ENCODE measurements at regions of chr5 and their contacts with region 1.

Region 1: DNA sequence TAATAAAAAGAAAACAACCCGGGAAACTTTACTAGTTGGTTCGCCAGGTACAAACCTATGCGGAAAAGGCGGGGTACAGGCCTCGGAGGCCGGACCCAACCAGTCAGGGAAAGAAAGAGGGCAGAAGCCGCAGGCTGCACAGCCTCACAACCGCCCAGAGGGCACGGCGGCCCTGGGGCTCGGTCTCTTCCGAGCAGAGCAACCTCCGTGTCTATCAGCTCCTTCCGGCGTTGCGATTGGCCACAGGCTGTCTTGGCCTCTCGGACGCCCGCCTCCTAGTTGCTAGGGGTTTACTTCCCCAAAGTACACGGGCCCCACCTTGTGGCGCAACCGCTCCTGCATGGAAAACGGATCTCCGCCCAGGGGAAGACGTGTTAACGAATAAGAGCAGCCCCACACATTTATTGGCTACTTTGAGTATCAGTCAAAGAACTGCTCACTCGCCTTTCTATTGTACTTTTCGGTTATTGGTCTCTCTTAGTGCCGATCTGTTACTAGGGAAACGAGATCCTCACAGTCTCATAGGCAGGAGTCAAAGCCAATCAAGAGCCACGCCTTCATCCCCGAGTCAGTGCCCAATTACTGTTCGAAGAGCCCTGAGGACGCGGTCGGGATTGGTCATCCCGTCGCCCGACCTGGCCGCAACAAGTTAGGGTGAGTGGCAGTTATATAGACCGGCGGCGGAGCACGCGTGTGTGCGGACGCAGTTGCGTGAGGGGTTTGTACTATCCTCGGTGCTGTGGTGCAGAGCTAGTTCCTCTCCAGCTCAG is at the start of gene G3BP1:
- DNase-seq: peak; percentile 100
- H3K4me3 ChIP-seq: peak within 1 kb of the TSS; percentile 89 to 92
- H3K27ac ChIP-seq: peak within 1 kb of the TSS; percentile 99
- H3K4me1 ChIP-seq: peaks cover 9 to 30% of the 10 kb centered on the region in 2 donors
- H3K27me3 ChIP-seq: no peaks in the 10 kb centered on the region
- CTCF ChIP-seq: peak; percentile 33 to 55 (median 51)
- total RNA-seq, gene G3BP1: 138 TPM

Region 2: DNA sequence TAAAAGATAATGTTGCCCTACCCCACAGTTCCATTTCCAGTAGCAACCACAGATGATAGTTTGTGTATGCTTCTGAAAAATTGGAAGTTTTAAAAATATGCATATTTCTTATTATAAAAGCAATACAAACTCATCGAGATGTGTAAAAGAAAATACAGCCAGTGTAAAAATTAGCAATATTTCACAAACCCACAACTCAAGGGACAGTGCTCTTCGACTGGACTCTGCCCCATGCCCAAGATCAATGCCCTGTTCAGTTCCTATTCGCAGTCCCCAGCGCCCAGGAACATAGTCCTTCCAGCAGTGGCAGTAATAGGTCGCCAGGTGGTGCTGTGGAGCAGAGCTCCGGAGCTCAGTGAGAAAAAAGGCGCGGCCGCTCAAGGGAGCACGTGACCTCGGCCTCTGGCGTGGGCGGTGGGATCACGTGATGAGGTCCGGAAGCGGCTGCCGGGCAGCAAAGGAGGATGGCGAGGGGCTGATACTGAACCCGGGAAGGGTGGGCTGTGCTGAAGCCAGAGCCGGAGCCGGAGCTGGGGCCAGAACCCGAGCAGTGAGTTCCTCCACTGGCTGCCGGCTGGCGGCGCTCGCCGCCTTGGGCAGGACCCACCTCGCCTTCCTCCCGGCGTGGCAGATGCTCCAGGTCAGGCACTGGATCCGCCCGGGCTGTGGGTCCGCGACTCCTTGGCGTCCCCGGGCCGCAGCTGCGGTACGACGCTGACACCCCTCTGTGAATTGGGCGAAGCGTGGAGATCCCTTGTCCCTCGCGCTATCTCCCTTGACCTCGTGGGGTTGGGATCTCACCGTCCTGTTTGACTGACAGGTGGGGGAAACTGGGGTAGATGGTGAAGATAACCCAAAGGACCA is 324.0 kb before region 1 on chr5 and contains the start of gene SLC36A1:
- intact Hi-C with region 1: loop called (anchors 1 kb)
- DNase-seq: peak; percentile 73 to 97
- H3K4me3 ChIP-seq: peak within 1 kb of the TSS; percentile 63 to 83
- H3K27ac ChIP-seq: peak within 1 kb of the TSS in 1 of 2 donors; percentile 47
- H3K4me1 ChIP-seq: no peaks in the 10 kb centered on the region
- H3K27me3 ChIP-seq: no peaks in the 10 kb centered on the region
- CTCF ChIP-seq: peak; percentile 96 to 97 (median 96)
- total RNA-seq, gene SLC36A1: 19.9 TPM

Region 3: GRCh38 chr5:151686674-151687407 is 84.6 kb before region 1 on chr5 and contains the start of gene SPARC:
- intact Hi-C with region 1: loop called (anchors 1 kb)
- DNase-seq: peak; percentile 79 to 96
- H3K4me3 ChIP-seq: peak within 1 kb of the TSS; percentile 76 to 78
- H3K27ac ChIP-seq: peak within 1 kb of the TSS; percentile 93 to 98
- H3K4me1 ChIP-seq: peaks cover 3 to 27% of the 10 kb centered on the region in 2 donors
- H3K27me3 ChIP-seq: no peaks in the 10 kb centered on the region
- CTCF ChIP-seq: peak in 1 of 3 experiments; percentile 11
- total RNA-seq, gene SPARC: 935 TPM

Region 4: DNA sequence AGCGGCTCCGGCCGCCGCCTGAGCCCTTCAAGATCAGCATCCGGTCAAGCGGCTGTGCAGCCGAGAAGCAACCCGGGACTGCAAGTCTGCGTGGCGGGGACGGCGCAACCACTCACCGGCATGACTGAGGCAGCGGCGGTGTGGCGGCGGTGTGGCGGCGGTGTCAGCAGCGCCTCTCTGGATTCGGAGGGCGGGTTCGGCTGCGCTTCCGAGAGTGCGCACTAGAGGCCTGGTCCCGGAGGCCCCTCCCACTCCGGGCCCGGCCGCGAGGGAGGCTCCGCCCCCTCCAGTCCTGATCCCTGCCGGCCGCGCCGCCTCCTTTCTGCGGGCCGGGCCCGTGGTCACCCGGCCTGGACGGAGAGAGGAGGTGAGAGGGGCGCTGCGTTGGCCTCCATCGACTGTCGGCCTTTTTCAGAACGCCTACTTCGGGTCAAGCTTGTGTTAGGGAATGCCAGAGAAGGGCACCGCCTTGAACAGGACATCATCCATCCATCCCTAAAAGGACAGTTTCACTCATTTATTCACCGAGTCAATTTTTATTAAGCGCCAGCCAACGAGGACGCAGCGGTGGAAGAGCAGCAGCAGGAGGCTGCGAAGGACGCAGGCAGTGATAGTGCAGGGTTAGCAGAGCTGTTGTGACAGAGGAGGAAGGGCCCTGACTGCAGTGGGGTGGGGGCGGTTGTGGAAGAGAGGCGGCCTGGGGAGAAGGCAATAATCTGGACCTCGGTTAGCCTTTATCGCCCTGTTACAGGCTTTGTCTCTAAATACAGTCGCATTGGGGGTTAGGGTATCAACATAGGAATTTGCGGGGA is 12.8 kb before region 1 on chr5 and contains the start of gene ATOX1:
- intact Hi-C with region 1: loop called (anchors 1 kb)
- DNase-seq: peak; percentile 74 to 96
- H3K4me3 ChIP-seq: peak within 1 kb of the TSS; percentile 80 to 94
- H3K27ac ChIP-seq: peak within 1 kb of the TSS; percentile 81 to 85
- H3K4me1 ChIP-seq: peaks cover 9 to 14% of the 10 kb centered on the region in 2 donors
- H3K27me3 ChIP-seq: no peaks in the 10 kb centered on the region
- CTCF ChIP-seq: peak in 2 of 3 experiments; percentile 29 to 42
- total RNA-seq, gene ATOX1: 179 TPM

Region 5: DNA sequence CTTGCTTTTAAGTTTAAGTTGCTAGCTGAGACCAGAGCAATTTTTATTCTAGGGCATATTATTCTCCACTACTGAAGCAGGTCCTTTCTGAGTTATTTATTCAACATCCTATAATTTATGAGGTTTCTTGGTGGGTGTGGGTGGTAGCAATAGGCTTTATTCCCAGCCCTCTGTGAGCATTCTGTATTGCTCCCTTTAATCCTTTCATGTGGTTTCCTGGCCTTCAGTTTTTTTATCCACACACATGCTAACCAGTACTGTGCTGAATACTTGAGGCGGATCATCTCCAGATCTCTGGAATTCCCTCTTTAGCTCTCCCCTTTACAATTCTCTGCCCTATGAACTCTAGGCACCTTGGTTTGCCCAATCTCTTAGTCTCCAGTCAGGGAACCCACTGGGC is 245.0 kb after region 1 on chr5:
- intact Hi-C with region 1: no loop called
- DNase-seq: no peak
- H3K4me3 ChIP-seq: no peak overlapping the region
- H3K27ac ChIP-seq: no peak overlapping the region
- H3K4me1 ChIP-seq: no peaks in the 10 kb centered on the region
- H3K27me3 ChIP-seq: no peaks in the 10 kb centered on the region
- CTCF ChIP-seq: no peak